Endothelial cell of umbilical vein (primary cell): ENCODE measurements at regions of chr1 and their contacts with region 1.

Region 1: DNA sequence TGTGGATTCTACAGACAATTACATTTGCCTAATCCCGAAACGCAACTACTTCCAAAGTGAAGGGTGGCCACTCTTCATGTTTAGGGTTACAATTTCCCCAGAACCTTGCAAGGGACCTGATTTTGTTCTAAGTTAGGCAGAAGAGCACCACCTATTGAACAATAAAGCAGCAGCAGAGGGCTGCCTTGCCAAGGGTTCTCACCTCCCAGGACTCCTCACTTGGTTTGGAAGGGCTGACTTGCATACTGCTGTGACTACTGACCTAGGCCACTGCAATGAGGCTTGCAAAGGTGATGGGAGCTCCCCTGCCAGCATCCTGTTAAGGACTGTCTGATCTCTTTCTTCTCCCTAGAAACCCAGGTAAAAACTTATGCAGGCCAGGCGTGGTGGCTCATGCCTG is 14.2 kb downstream of the MTOR start:
- DNase-seq: no peak
- H3K4me3 ChIP-seq: no peak overlapping the region
- H3K27ac ChIP-seq: no peak overlapping the region
- H3K4me1 ChIP-seq: no peaks in the 10 kb centered on the region
- H3K27me3 ChIP-seq: no peaks in the 10 kb centered on the region
- CTCF ChIP-seq: no peak
- POLR2A ChIP-seq: no peak

Region 2: DNA sequence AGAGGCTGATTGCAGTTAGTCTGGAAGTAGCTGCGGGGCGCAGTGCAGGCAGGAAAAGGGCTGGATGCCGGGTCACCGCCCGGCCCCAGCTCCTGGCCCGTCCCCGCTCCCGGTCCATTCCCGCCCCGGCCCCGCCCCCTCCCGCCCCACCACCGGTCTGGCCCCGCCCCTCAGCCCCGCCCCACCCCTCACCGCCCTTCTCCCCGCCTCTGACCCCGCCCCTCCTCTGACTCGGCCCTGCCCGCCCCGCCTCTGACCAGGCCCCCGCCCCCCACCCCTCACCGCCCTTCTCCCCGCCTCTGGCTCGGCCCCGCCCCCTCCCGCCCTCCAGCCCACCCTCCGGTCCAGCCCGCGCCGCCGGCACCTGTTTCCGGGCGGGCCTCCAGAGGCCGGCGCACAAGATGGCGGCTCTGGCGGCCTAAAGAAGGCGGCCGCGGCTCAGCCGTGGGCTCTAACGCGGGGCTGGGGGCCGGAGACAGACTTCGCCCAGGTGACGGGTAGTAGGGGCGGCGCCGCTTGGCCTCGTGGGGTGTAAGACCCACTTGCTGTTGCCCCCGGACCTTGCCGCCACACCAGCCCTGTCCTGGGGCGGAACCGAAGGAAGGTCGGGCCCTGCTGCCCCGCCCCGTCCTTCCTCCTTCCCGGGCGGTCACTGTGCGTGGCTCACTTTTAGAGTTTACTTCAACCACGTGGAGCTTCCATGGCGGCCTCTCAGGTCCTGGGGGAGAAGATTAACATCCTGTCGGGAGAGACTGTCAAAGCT is 24.9 kb after region 1 on chr1 and contains the start of gene UBIAD1:
- CTCF ChIA-PET with region 1: no interaction called
- POLR2A ChIA-PET with region 1: no interaction called
- dilution Hi-C with region 1: no loop called
- intact Hi-C with region 1: no loop called
- DNase-seq: peak; percentile 87
- H3K4me3 ChIP-seq: peak within 1 kb of the TSS; percentile 52 to 77 (median 66)
- H3K27ac ChIP-seq: peak within 1 kb of the TSS; percentile 93
- H3K4me1 ChIP-seq: peaks cover 13% of the 10 kb centered on the region
- H3K27me3 ChIP-seq: no peaks in the 10 kb centered on the region
- CTCF ChIP-seq: no peak
- POLR2A ChIP-seq: peak; percentile 80
- total RNA-seq, gene UBIAD1: 12.7 and 13.0 TPM in 2 replicates

Region 3: GRCh38 chr1:11320153-11320936 is 72.2 kb after region 1 on chr1:
- CTCF ChIA-PET with region 1: no interaction called
- POLR2A ChIA-PET with region 1: no interaction called
- dilution Hi-C with region 1: no loop called
- intact Hi-C with region 1: loop called (anchors 5 kb)
- DNase-seq: no peak
- H3K4me3 ChIP-seq: no peak overlapping the region
- H3K27ac ChIP-seq: no peak overlapping the region
- H3K4me1 ChIP-seq: no peaks in the 10 kb centered on the region
- H3K27me3 ChIP-seq: peaks cover 0 to 2% of the 10 kb centered on the region in 2 experiments
- CTCF ChIP-seq: peak; percentile 51 to 74
- POLR2A ChIP-seq: no peak

Region 4: GRCh38 chr1:11337580-11338073 is 89.5 kb after region 1 on chr1:
- CTCF ChIA-PET with region 1: no interaction called
- POLR2A ChIA-PET with region 1: no interaction called
- dilution Hi-C with region 1: no loop called
- intact Hi-C with region 1: loop called (anchors 5 kb)
- DNase-seq: peak; percentile 51
- H3K4me3 ChIP-seq: no peak overlapping the region
- H3K27ac ChIP-seq: no peak overlapping the region
- H3K4me1 ChIP-seq: no peaks in the 10 kb centered on the region
- H3K27me3 ChIP-seq: peaks cover 0 to 4% of the 10 kb centered on the region in 2 experiments
- CTCF ChIP-seq: peak; percentile 84 to 91
- POLR2A ChIP-seq: no peak